ENCODE measurements at regions of chr1 and their contacts with region 1.

Region 1: GRCh38 chr1:92485381-92486257 is 1.1 kb downstream of the GFI1 start:
- DNase-seq: peak; percentile 73 to 85 (median 77)
- H3K4me3 ChIP-seq: peak overlapping the region; percentile 84 to 92
- H3K4me3 Mint-ChIP-seq: peak overlapping the region; percentile 89 to 97 (median 94)
- H3K27ac ChIP-seq: peak overlapping the region; percentile 52
- H3K27ac Mint-ChIP-seq: peak overlapping the region; percentile 88 to 94 (median 91)
- H3K4me1 ChIP-seq: peaks cover 30% of the 10 kb centered on the region
- H3K4me1 Mint-ChIP-seq: peaks cover 14 to 69% (median 31%) of the 10 kb centered on the region in 4 donors
- H3K27me3 ChIP-seq: no peaks in the 10 kb centered on the region
- H3K27me3 Mint-ChIP-seq: no peaks in the 10 kb centered on the region

Region 2: GRCh38 chr1:92298573-92299476 is 186.8 kb before region 1 on chr1 and contains the starts of genes GLMN and RPAP2:
- CTCF ChIA-PET with region 1: interaction called, 3 read pairs
- POLR2A ChIA-PET with region 1: interaction called, 12 read pairs
- intact Hi-C with region 1: loop called (anchors 5 kb)
- DNase-seq: peak; percentile 69 to 79 (median 75)
- H3K4me3 ChIP-seq: peak within 1 kb of the TSS; percentile 75 to 87
- H3K4me3 Mint-ChIP-seq: peak within 1 kb of the TSS; percentile 95 to 99 (median 98)
- H3K27ac ChIP-seq: peak within 1 kb of the TSS; percentile 88
- H3K27ac Mint-ChIP-seq: peak within 1 kb of the TSS; percentile 87 to 99 (median 98)
- H3K4me1 ChIP-seq: peaks cover 29% of the 10 kb centered on the region
- H3K4me1 Mint-ChIP-seq: peaks cover 23 to 51% (median 26%) of the 10 kb centered on the region in 4 donors
- H3K27me3 ChIP-seq: no peaks in the 10 kb centered on the region
- H3K27me3 Mint-ChIP-seq: no peaks in the 10 kb centered on the region
- total RNA-seq, gene GLMN: 13.9 to 14.7 TPM
- total RNA-seq, gene RPAP2: 39.0 to 44.0 TPM

Region 3: DNA sequence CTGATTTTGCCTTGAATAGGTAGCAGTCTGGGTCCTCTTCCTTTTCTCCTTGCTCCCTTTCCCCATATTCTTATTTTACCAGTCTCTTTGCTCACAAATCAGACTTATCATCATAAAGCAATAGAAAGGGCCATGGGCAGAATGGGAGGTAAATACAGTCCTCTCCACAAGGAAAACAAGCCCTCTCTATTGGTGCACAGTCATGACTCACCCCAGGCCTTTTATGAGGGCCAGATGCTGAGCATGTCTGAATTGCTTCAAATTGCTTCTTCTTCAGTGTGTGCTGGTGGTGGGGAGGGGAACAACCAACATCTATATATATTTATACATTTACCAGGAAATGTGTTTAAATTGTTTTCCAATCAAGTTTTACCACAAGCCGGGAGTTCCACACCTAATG is 74.1 kb before region 1 on chr1:
- CTCF ChIA-PET with region 1: interaction called, 10 read pairs
- POLR2A ChIA-PET with region 1: interaction called, 7 read pairs
- intact Hi-C with region 1: no loop called
- DNase-seq: no peak
- H3K4me3 ChIP-seq: no peak overlapping the region
- H3K4me3 Mint-ChIP-seq: peak overlapping the region in 6 of 8 donors; percentile 18 to 71 (median 42)
- H3K27ac ChIP-seq: no peak overlapping the region
- H3K27ac Mint-ChIP-seq: peak overlapping the region in 4 of 7 donors; percentile 2 to 54 (median 14)
- H3K4me1 ChIP-seq: peaks cover 29% of the 10 kb centered on the region
- H3K4me1 Mint-ChIP-seq: peaks cover 33 to 54% (median 37%) of the 10 kb centered on the region in 4 donors
- H3K27me3 ChIP-seq: no peaks in the 10 kb centered on the region
- H3K27me3 Mint-ChIP-seq: no peaks in the 10 kb centered on the region

Region 4: DNA sequence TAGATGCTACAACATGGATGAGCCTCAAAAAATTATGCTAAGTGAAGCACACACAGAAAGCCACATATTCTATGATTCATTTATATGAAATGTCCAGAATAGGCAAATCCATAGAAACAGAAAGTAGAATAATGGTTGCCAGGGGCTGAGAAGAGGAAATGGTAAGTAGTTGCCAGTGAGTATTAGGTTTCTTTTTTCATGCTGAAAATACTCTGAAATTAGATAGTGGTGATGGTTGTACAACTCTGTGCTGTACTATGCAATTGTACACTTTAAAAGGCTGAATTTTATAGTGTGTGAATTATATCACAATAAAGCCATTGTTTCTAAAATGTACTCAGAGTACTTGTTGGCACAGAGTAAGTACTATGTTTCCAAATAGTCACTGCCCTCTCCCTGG is 16.6 kb after region 1 on chr1:
- CTCF ChIA-PET with region 1: interaction called, 5 read pairs
- POLR2A ChIA-PET with region 1: interaction called, 11 read pairs
- intact Hi-C with region 1: no loop called
- DNase-seq: no peak
- H3K4me3 ChIP-seq: no peak overlapping the region
- H3K4me3 Mint-ChIP-seq: no peak overlapping the region
- H3K27ac ChIP-seq: no peak overlapping the region
- H3K27ac Mint-ChIP-seq: peak overlapping the region in 1 of 7 donors; percentile 60
- H3K4me1 ChIP-seq: no peaks in the 10 kb centered on the region
- H3K4me1 Mint-ChIP-seq: peaks cover 5 to 13% (median 7%) of the 10 kb centered on the region in 4 donors
- H3K27me3 ChIP-seq: no peaks in the 10 kb centered on the region
- H3K27me3 Mint-ChIP-seq: no peaks in the 10 kb centered on the region

Region 5: DNA sequence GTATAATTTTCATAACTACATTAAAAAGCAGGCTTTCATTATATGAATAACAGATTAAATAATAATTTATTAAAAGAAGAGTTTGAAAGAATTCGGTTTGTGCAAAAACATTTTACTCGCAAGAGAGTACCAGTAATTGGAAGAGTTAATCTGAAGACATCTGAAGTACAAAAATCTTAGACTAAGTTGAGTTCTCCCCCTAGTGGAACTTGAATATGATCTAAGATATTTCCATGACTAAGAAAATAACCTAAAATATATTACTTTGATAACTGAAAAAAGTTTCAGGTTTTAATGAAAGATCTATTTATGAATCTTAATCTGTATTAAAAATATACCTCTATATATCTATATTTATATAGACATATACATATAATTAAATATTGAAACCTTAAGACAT is 113.6 kb after region 1 on chr1:
- CTCF ChIA-PET with region 1: interaction called, 29 read pairs
- POLR2A ChIA-PET with region 1: interaction called, 20 read pairs
- intact Hi-C with region 1: loop called (anchors 1 kb)
- DNase-seq: peak in 4 of 5 donors; percentile 36 to 46 (median 42)
- H3K4me3 ChIP-seq: no peak overlapping the region
- H3K4me3 Mint-ChIP-seq: no peak overlapping the region
- H3K27ac ChIP-seq: no peak overlapping the region
- H3K27ac Mint-ChIP-seq: peak overlapping the region in 1 of 7 donors; percentile 25
- H3K4me1 ChIP-seq: no peaks in the 10 kb centered on the region
- H3K4me1 Mint-ChIP-seq: peaks cover 0 to 4% (median 1%) of the 10 kb centered on the region in 4 donors
- H3K27me3 ChIP-seq: no peaks in the 10 kb centered on the region
- H3K27me3 Mint-ChIP-seq: no peaks in the 10 kb centered on the region

Measured in CD4-positive, alpha-beta memory T cell (primary cell).